Activated CD4-positive, alpha-beta memory T cell treated with anti-CD3 and anti-CD28 coated beads for 36 hours (primary cell): ENCODE measurements at regions of chr22 and their contacts with region 1.

Region 1: DNA sequence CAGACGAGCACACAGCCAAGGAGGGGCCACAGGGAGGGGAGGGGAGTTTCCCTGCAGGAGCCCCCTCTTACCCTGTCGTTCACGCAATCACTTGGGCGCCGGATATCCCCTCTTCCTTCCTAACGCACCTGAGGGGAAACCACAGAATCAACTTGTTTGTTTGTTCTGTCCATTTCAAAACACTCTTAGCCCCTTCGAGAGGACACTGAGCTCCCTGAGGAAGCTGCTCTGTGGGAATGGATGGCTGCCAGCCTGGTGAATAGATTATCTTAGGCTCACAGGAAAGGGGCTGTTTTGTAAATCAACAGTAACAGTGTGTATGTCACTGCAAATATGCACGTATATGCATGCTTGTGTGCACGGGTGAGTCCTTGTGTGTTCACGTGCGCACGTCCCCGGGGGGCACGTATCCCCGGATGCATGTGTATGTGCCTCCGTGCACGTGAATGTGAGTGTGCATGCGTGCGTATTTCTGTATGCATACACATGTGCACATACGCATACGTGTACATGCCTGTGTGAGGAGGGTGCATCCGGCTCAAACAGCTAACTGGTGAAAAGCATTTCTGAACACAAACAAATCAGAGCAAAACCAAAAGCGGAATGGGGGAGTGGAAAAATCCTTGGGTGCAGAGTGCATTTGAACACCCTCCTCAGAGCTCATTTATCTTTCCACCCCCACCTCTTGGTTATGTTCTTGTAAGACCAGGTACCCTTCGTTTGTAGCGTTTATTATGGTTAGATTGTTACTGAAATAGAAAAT is 7.2 kb downstream of the ARSA start:
- DNase-seq: peak; percentile 85
- H3K4me3 Mint-ChIP-seq: peak overlapping the region; percentile 75
- H3K27ac Mint-ChIP-seq: peak overlapping the region; percentile 97
- H3K4me1 Mint-ChIP-seq: peaks cover 37% of the 10 kb centered on the region
- H3K27me3 Mint-ChIP-seq: no peaks in the 10 kb centered on the region

Region 2: GRCh38 chr22:50341977-50342650 is 278.7 kb before region 1 on chr22:
- CTCF ChIA-PET with region 1: interaction called, 11 read pairs
- POLR2A ChIA-PET with region 1: no interaction called
- intact Hi-C with region 1: loop called (anchors 2 kb)
- DNase-seq: peak; percentile 92
- H3K4me3 Mint-ChIP-seq: peak overlapping the region; percentile 72
- H3K27ac Mint-ChIP-seq: peak overlapping the region; percentile 83
- H3K4me1 Mint-ChIP-seq: peaks cover 10% of the 10 kb centered on the region
- H3K27me3 Mint-ChIP-seq: no peaks in the 10 kb centered on the region

Region 3: DNA sequence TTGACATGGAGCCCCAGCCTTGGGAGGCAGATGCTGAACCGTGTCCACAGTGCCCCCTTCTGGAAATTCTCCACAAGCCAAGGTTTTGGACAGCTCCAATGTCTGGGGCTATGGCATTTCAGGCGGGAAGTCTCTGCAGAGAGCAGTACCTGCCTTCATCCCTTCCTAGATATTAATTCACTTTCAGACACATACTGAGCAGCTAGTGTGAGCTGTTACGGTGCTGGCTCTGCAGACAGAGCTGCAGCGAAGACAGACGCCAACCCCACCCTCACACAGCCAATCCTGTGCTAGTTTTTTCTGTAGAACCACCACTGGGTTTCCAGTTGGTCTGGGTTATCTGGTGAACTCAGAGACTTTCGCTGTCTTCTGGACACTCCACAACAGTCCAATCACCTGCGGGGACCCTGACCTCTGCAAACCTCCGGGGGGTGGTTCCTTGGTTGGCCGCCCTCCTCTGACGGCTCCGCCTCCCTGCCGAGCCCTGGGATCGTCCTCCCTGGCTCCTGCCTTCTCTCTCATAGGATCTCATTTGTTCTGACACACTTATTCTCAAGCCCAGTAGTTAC is 122.4 kb before region 1 on chr22:
- CTCF ChIA-PET with region 1: interaction called, 11 read pairs
- POLR2A ChIA-PET with region 1: no interaction called
- intact Hi-C with region 1: no loop called
- DNase-seq: peak; percentile 82
- H3K4me3 Mint-ChIP-seq: no peak overlapping the region
- H3K27ac Mint-ChIP-seq: no peak overlapping the region
- H3K4me1 Mint-ChIP-seq: no peaks in the 10 kb centered on the region
- H3K27me3 Mint-ChIP-seq: no peaks in the 10 kb centered on the region

Region 4: GRCh38 chr22:50530877-50531545 is 89.8 kb before region 1 on chr22:
- CTCF ChIA-PET with region 1: interaction called, 102 read pairs
- POLR2A ChIA-PET with region 1: interaction called, 49 read pairs
- intact Hi-C with region 1: loop called (anchors 1 kb)
- DNase-seq: peak; percentile 92
- H3K4me3 Mint-ChIP-seq: peak overlapping the region; percentile 92
- H3K27ac Mint-ChIP-seq: peak overlapping the region; percentile 99
- H3K4me1 Mint-ChIP-seq: peaks cover 54% of the 10 kb centered on the region
- H3K27me3 Mint-ChIP-seq: no peaks in the 10 kb centered on the region

Region 5: DNA sequence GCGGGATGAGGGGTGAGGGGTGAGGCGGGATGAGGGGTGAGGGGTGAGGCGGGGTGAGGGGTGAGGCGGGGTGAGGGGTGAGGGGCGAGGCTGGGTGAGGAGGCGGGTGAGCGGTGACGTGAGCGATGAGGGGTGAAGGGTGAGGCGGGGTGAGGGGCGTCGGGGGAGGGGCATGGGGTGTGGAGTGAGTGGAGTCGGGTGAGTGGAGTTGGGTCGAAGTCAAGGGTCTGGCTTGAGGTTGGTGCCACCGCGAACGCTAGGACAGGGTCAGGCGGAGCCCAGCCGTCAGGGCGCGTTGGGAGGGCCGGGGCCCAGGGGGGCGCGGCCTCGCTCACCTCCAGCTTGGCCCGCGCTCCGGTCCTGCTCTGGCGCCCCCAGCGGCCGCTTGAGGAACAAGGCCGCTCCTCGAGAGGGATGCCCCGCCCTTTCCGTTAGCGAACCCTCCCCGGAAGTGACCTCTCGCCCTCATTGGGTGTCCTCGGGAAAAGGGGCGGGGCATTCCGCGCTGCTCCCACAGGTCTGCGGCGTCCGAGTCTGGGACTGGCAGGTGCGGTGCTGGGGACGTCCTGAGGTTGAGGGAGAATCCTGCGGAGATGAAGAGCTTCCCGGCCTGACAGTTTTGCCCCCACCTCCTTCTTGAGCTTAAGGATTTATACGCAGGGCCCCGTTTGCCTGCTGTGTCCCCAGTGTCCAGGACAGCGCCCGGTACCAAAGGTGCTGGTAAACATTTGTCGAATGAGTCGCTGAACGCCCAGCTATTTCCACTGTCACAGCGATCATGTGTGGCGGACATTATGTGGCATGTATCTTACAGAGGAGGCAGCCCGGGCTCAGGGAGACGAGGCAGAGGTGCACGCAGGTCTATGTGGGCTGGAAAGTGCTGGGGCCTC is 58.0 kb before region 1 on chr22 and contains the start of gene SYCE3:
- CTCF ChIA-PET with region 1: interaction called, 17 read pairs
- POLR2A ChIA-PET with region 1: interaction called, 7 read pairs
- intact Hi-C with region 1: loop called (anchors 10 kb)
- DNase-seq: peak; percentile 98
- H3K4me3 Mint-ChIP-seq: peak within 1 kb of the TSS; percentile 90
- H3K27ac Mint-ChIP-seq: peak within 1 kb of the TSS; percentile 60
- H3K4me1 Mint-ChIP-seq: peaks cover 15% of the 10 kb centered on the region
- H3K27me3 Mint-ChIP-seq: no peaks in the 10 kb centered on the region
- total RNA-seq, gene SYCE3: 0.87 to 1.0 TPM